HCT116 (cell line): ENCODE measurements at regions of chr19 and their contacts with region 1.

Region 1: GRCh38 chr19:39445265-39446111 is at the start of gene SUPT5H:
- DNase-seq: peak; percentile 96
- ATAC-seq: peak; percentile 95
- H3K4me3 ChIP-seq: peak within 1 kb of the TSS; percentile 74 to 100
- H3K27ac ChIP-seq: peak within 1 kb of the TSS; percentile 87
- H3K4me1 ChIP-seq: peaks cover 6 to 30% of the 10 kb centered on the region in 2 experiments
- H3K27me3 ChIP-seq: no peaks in the 10 kb centered on the region
- CTCF ChIP-seq: no peak
- POLR2A ChIP-seq: peak; percentile 88
- RAD21 ChIP-seq: no peak
- total RNA-seq, gene SUPT5H: 120 TPM

Region 2: DNA sequence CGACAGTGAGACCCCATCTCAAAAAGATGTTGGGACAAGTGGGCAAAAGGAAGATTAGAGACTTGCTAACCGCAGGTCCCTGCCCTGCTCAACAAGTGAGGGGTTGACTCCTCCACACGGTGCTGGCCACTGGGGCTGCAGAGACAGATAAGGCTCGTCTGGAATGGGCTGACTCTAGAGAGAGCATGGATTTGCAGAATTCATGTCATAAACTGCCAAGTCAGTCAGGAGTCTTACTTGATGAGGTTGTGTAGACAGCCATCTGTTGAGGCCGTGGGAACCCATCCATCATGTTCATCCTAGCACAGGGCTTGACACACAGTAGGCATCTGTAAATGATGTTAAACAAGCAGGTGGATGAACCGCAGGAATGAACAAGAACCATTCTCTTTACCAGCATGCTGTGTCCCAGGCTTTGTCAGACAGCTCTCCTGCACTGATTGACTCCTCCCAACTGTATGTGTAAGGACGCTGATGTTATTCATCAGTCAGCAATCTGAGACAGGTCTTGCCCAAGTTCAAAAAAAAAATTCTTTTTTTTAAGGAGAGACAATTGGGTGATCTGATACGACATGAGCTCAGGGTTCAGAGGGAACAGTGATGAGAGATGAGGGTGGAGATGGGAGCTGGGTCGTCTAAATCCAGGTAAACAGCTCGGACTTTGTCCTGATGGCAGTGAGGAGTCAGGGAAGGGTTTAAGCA is 63.4 kb before region 1 on chr19:
- CTCF ChIA-PET with region 1: no interaction called
- POLR2A ChIA-PET with region 1: no interaction called
- RAD21 ChIA-PET with region 1: no interaction called
- intact Hi-C with region 1: no loop called
- DNase-seq: no peak
- ATAC-seq: no peak
- H3K4me3 ChIP-seq: no peak overlapping the region
- H3K27ac ChIP-seq: no peak overlapping the region
- H3K4me1 ChIP-seq: no peaks in the 10 kb centered on the region
- H3K27me3 ChIP-seq: no peaks in the 10 kb centered on the region
- CTCF ChIP-seq: no peak
- POLR2A ChIP-seq: no peak
- RAD21 ChIP-seq: no peak

Region 3: GRCh38 chr19:39397360-39398296 is 47.9 kb before region 1 on chr19:
- CTCF ChIA-PET with region 1: interaction called, 5 read pairs
- POLR2A ChIA-PET with region 1: interaction called, 10 read pairs
- RAD21 ChIA-PET with region 1: no interaction called
- intact Hi-C with region 1: no loop called
- DNase-seq: peak; percentile 72
- ATAC-seq: peak; percentile 74
- H3K4me3 ChIP-seq: peak overlapping the region in 1 of 2 experiments; percentile 3; a peak in 2 of 4 replicates
- H3K27ac ChIP-seq: peak overlapping the region; percentile 91
- H3K4me1 ChIP-seq: peaks cover 36 to 58% of the 10 kb centered on the region in 2 experiments
- H3K27me3 ChIP-seq: no peaks in the 10 kb centered on the region
- CTCF ChIP-seq: peak in 2 of 3 experiments; percentile 91 to 98; a peak in 4 of 6 replicates
- POLR2A ChIP-seq: no peak
- RAD21 ChIP-seq: no peak

Region 4: DNA sequence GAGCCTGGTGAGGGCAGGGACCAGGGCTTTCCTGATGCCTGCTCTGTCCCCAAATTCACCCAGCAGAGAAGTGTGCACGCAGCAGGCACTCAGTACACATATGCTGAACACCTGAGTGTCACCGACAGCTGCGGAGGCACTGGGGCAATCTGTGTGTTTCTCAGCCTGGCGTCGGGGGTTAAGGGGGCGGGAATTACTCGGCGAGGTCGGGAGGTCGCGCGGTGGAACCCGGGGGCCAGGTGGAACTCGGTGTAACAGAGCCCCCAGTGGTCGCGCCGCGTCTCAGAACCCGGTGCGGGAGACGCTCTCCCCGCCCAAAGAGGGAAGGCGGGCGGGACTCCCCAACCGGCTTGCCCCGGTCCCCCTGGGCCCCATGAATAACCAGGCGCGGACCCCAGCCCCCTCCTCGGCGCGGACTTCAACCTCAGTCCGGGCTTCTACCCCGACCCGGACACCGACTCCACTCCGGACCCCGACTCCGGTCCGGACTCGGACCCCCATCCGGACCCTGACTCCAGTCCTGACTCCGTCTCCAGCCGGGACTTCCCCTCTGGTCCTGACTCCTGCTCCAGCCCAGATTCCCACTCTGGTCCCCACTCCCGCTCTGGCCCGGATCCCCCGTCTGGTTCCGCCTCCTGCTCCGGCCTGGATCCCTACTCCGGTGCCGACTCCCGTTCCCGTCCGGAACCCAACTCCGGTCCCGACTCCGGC is 69.5 kb after region 1 on chr19 and contains the start of gene SELENOV:
- CTCF ChIA-PET with region 1: no interaction called
- POLR2A ChIA-PET with region 1: no interaction called
- RAD21 ChIA-PET with region 1: no interaction called
- intact Hi-C with region 1: no loop called
- DNase-seq: no peak
- ATAC-seq: no peak
- H3K4me3 ChIP-seq: no peak within 1 kb of the TSS
- H3K27ac ChIP-seq: no peak within 1 kb of the TSS
- H3K4me1 ChIP-seq: no peaks in the 10 kb centered on the region
- H3K27me3 ChIP-seq: no peaks in the 10 kb centered on the region
- CTCF ChIP-seq: no peak
- POLR2A ChIP-seq: no peak
- RAD21 ChIP-seq: no peak
- total RNA-seq, gene SELENOV: not detected

Region 5: GRCh38 chr19:39532233-39533002 is 86.9 kb after region 1 on chr19 and contains the start of gene EID2B:
- CTCF ChIA-PET with region 1: interaction called, 7 read pairs
- POLR2A ChIA-PET with region 1: interaction called, 4 read pairs
- RAD21 ChIA-PET with region 1: no interaction called
- intact Hi-C with region 1: loop called (anchors 2 kb)
- DNase-seq: peak; percentile 88
- ATAC-seq: peak; percentile 97
- H3K4me3 ChIP-seq: peak within 1 kb of the TSS; percentile 67 to 82
- H3K27ac ChIP-seq: peak within 1 kb of the TSS; percentile 58
- H3K4me1 ChIP-seq: peaks cover 3 to 13% of the 10 kb centered on the region in 2 experiments; a peak in 3 of 4 replicates
- H3K27me3 ChIP-seq: no peaks in the 10 kb centered on the region
- CTCF ChIP-seq: peak; percentile 87 to 91 (median 89)
- POLR2A ChIP-seq: peak; percentile 93
- RAD21 ChIP-seq: peak; percentile 98
- total RNA-seq, gene EID2B: 1.2 TPM

Region 6: GRCh38 chr19:39539519-39540332 is 94.2 kb after region 1 on chr19 and contains the start of gene EID2:
- CTCF ChIA-PET with region 1: interaction called, 9 read pairs
- POLR2A ChIA-PET with region 1: interaction called, 4 read pairs
- RAD21 ChIA-PET with region 1: no interaction called
- intact Hi-C with region 1: loop called (anchors 2 kb)
- DNase-seq: peak; percentile 84
- ATAC-seq: peak; percentile 96
- H3K4me3 ChIP-seq: peak within 1 kb of the TSS; percentile 78 to 82
- H3K27ac ChIP-seq: peak within 1 kb of the TSS; percentile 86
- H3K4me1 ChIP-seq: peaks cover 11 to 19% of the 10 kb centered on the region in 2 experiments
- H3K27me3 ChIP-seq: no peaks in the 10 kb centered on the region
- CTCF ChIP-seq: peak; percentile 62 to 71 (median 65); a peak in 5 of 6 replicates
- POLR2A ChIP-seq: peak; percentile 77
- RAD21 ChIP-seq: peak; percentile 65
- total RNA-seq, gene EID2: 11.7 TPM

Region 7: GRCh38 chr19:39671738-39672363 is 226.4 kb after region 1 on chr19:
- CTCF ChIA-PET with region 1: interaction called, 13 read pairs
- POLR2A ChIA-PET with region 1: no interaction called
- RAD21 ChIA-PET with region 1: no interaction called
- intact Hi-C with region 1: loop called (anchors 1 kb)
- DNase-seq: peak; percentile 66
- ATAC-seq: peak; percentile 96
- H3K4me3 ChIP-seq: no peak overlapping the region
- H3K27ac ChIP-seq: no peak overlapping the region
- H3K4me1 ChIP-seq: peaks cover 0 to 6% of the 10 kb centered on the region in 2 experiments; a peak in 1 of 4 replicates
- H3K27me3 ChIP-seq: 0 out of 2 replicates have a peak, but pooled peaks cover 3% of the 10 kb centered on the region
- CTCF ChIP-seq: peak; percentile 45 to 75 (median 62); a peak in 4 of 6 replicates
- POLR2A ChIP-seq: no peak
- RAD21 ChIP-seq: peak; percentile 92